ENCODE measurements at regions of chr9 and their contacts with region 1.

Region 1: DNA sequence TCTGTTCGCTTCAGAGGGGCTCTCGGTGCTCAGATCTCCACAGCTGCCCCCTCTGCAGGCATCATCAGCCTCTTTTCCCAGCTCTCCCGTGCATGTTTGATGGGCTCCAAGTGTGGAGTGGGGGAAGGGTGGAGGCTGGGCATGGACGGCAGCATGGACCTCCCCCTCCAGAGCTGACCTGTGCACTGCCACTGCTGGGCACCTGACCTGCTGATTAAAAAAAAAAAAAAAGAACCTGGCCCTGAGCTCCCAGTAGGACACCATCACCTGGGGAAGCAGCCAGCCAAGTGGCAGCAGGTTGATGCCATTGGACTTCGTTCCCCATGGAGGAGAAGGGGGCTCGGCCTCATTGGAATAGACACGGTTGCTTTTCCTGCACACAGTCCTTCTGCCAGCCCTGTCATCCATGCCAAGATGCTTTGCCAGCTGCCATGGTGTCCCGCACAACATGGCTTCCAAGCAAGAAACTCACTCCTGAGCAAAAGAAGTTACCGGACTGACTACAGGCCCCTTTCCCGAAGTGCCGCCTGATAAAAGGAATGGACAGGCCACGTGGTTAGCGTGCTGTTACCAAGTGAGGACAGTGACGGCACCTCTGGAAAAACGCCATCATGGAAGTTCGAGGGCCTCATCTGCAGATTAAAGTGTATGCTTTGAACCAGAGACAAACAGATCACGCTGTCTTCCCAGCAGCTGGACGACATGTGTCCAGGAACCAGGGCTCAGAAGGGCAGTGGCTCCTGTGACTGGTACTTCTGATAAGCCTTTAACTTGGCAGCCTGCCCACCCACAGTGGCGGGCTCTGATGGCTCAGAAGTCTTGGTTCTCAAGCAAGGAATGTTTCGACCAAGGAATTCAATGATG is 14.7 kb upstream of the BRD3OS start:
- DNase-seq: peak in 1 of 10 donors; percentile 29
- H3K4me3 ChIP-seq: no peak overlapping the region
- H3K27ac ChIP-seq: no peak overlapping the region
- H3K27me3 ChIP-seq: no peaks in the 10 kb centered on the region
- CTCF ChIP-seq: no peak

Region 2: GRCh38 chr9:132744881-132745755 is 1265.4 kb before region 1 on chr9:
- intact Hi-C with region 1: loop called in 1 of 2 experiments (anchors 10 kb)
- DNase-seq: peak in 1 of 10 donors; percentile 23
- H3K4me3 ChIP-seq: peak overlapping the region in 3 of 59 donors; percentile 9 to 16 (median 15)
- H3K27ac ChIP-seq: no peak overlapping the region
- H3K27me3 ChIP-seq: peaks cover 0 to 22% (median 0%) of the 10 kb centered on the region in 45 donors
- CTCF ChIP-seq: no peak

Measured in dorsolateral prefrontal cortex (tissue), 120 donors.